WTC11 (cell line): ENCODE measurements at regions of chr7 and their contacts with region 1.

Region 1: GRCh38 chr7:78020136-78020873 is 221.7 kb downstream of the PHTF2 start:
- DNase-seq: peak; percentile 31
- ATAC-seq: peak; percentile 55
- H3K4me3 Mint-ChIP-seq: peak overlapping the region; percentile 66
- H3K27ac Mint-ChIP-seq: no peak overlapping the region
- H3K4me1 Mint-ChIP-seq: peaks cover 33% of the 10 kb centered on the region
- H3K27me3 Mint-ChIP-seq: peaks cover 15% of the 10 kb centered on the region
- CTCF ChIP-seq: peak; percentile 33; the same call in 1 of the 2 replicates

Region 2: DNA sequence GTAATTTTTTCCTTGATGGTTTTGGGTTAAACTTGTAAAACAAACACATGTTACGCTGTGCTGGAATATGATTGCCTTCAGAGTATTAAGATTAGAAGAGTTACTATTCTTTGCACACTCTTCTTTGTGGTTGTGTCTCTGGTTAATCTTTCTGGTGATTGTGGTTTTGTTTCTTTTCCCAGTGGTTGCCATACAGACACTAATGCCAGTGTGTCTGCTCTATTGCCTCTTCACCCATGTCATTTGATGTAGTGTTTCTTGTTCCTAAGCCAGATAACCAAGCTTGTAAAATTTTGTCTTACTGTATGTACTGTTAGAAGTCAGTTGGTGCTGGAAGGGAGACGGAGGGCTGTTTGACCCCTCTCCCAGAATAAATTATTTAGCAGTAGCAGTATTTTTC is 96.9 kb before region 1 on chr7:
- CTCF ChIA-PET with region 1: no interaction called
- POLR2A ChIA-PET with region 1: no interaction called
- DNase-seq: no peak
- ATAC-seq: no peak
- H3K4me3 Mint-ChIP-seq: no peak overlapping the region
- H3K27ac Mint-ChIP-seq: no peak overlapping the region
- H3K4me1 Mint-ChIP-seq: no peaks in the 10 kb centered on the region
- H3K27me3 Mint-ChIP-seq: no peaks in the 10 kb centered on the region
- CTCF ChIP-seq: no peak

Region 3: DNA sequence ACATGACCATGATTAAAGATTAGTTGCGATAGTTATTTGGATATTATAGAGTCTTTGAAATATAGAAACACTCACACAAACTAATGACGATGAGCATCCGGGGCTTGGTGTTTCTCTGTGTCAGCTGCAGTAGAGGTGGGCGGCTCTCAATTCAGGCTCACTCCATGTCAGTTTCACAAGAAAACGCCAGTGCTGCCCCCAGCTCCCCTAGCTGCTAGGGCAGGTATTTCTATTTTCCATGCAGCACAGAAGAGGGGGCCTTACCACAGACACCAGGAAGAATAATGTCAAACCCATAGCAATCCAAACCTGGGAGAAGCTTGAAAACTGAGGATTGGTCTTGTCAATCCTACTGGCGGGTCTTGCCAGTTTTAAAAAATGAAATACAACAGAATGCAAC is 24.6 kb before region 1 on chr7:
- CTCF ChIA-PET with region 1: interaction called, 24 read pairs
- POLR2A ChIA-PET with region 1: interaction called, 4 read pairs
- DNase-seq: peak; percentile 56
- ATAC-seq: peak; percentile 100
- H3K4me3 Mint-ChIP-seq: no peak overlapping the region
- H3K27ac Mint-ChIP-seq: no peak overlapping the region
- H3K4me1 Mint-ChIP-seq: peaks cover 6% of the 10 kb centered on the region; the same call in 1 of the 2 replicates
- H3K27me3 Mint-ChIP-seq: no peaks in the 10 kb centered on the region
- CTCF ChIP-seq: peak; percentile 24; the same call in 1 of the 2 replicates

Region 4: DNA sequence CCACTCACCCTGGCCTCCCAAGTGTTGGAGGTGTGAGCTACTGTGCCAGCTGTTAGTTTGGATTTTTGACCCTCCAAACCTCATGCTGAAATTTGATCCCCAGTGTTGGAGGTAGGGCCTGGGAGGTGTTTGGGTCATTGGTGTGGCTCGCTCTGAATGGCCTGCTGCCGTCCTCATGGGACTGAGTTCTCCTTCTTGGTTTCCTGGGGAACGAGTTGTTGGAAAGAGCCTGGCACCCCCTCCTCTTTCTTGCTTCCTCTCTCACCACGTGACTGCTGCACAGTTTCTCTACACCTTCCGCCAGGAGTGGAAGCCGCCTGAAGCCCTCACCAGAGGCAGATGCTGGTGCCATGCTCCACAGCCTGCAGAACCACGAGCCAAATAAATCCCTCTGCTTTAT is 31.8 kb after region 1 on chr7:
- CTCF ChIA-PET with region 1: interaction called, 14 read pairs
- POLR2A ChIA-PET with region 1: no interaction called
- DNase-seq: peak; percentile 67
- ATAC-seq: peak; percentile 99
- H3K4me3 Mint-ChIP-seq: 0 out of 2 replicates have a peak overlapping the region, but pooled peaks have one; percentile 31
- H3K27ac Mint-ChIP-seq: peak overlapping the region; percentile 98
- H3K4me1 Mint-ChIP-seq: peaks cover 35% of the 10 kb centered on the region
- H3K27me3 Mint-ChIP-seq: no peaks in the 10 kb centered on the region
- CTCF ChIP-seq: no peak

Region 5: DNA sequence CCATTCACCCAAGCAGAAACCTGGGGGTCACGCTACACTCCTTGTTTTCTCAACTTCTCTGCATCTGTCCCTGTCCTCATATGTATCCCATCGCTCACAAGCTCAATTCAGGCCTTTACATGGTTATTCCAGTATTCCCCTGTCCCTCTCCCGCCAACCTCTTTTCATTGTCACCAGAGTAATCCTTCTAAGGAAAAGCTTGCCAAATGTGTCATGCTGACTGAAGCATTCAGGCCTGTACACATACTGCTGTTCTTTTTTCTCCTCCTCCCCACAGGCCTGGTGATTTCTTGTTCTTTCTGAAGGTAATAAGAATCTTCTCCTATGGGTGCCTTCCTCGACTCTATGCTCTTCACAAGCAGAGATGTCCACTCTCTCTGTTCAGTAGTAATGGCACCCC is 60.5 kb after region 1 on chr7:
- CTCF ChIA-PET with region 1: interaction called, 35 read pairs
- POLR2A ChIA-PET with region 1: no interaction called
- DNase-seq: no peak
- ATAC-seq: no peak
- H3K4me3 Mint-ChIP-seq: no peak overlapping the region
- H3K27ac Mint-ChIP-seq: no peak overlapping the region
- H3K4me1 Mint-ChIP-seq: peaks cover 13% of the 10 kb centered on the region
- H3K27me3 Mint-ChIP-seq: peaks cover 10% of the 10 kb centered on the region
- CTCF ChIP-seq: no peak

Region 6: GRCh38 chr7:78134256-78134655 is 114.0 kb after region 1 on chr7:
- CTCF ChIA-PET with region 1: interaction called, 12 read pairs
- POLR2A ChIA-PET with region 1: no interaction called
- DNase-seq: no peak
- ATAC-seq: peak; percentile 63
- H3K4me3 Mint-ChIP-seq: no peak overlapping the region
- H3K27ac Mint-ChIP-seq: no peak overlapping the region
- H3K4me1 Mint-ChIP-seq: peaks cover 16% of the 10 kb centered on the region
- H3K27me3 Mint-ChIP-seq: no peaks in the 10 kb centered on the region
- CTCF ChIP-seq: peak; percentile 53